CD4-positive, alpha-beta memory T cell (primary cell): ENCODE measurements at regions of chr4 and their contacts with region 1.

Region 1: DNA sequence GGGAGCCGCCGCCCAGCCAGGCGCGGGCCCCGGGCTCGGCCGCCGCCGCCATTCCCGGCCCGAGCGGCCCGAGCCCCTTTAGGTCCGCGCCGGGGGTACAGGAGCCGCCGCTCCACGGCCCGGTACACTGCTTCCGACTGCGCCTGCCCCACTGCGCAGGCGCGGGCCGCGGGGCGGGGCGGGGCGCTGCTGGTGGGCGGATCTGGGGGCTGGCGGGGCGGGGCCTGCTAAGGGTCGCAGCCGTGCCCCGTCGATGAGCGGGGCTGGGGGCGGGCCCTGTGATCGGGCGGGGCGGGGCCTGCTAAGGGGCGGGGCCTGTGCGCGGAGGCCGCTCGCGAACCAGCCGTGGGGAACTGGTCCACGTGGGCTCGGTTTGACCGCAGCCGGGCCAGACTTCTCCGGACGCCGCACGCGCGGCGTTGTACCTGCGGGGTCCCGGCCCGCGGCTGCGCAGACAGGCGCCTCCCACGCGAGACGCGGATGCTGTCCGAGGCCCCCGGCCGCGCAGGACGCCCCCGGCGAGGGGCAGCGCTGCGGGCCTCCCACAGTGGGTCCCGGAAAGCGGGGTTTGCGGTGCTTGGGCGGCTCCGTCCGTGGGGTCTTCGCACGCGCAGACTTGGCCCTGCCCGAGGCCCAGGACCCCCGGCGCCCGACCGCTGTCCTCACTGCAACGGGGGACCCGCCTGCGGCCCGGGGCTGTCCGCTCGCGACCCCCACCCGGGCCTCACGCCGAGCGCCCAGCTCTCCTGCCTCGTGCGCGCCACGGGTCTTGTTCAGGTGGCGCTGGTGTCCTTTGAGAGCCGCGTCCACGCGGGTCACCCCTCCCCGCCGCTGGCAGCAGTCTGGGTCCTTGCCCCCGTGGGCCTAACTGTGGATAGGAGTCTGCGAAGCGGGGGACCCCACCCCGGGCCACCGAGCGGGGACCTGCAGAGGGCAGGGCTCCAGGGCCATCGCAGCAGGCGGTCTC is at the start of gene DGKQ:
- DNase-seq: peak; percentile 78 to 88 (median 83)
- H3K4me3 ChIP-seq: peak within 1 kb of the TSS; percentile 36 to 57
- H3K4me3 Mint-ChIP-seq: peak within 1 kb of the TSS; percentile 34 to 76 (median 52)
- H3K27ac ChIP-seq: peak within 1 kb of the TSS; percentile 51
- H3K27ac Mint-ChIP-seq: peak within 1 kb of the TSS in 1 of 7 donors; percentile 60
- H3K4me1 ChIP-seq: peaks cover 24% of the 10 kb centered on the region
- H3K4me1 Mint-ChIP-seq: peaks cover 0 to 13% (median 3%) of the 10 kb centered on the region in 4 donors
- H3K27me3 ChIP-seq: no peaks in the 10 kb centered on the region
- H3K27me3 Mint-ChIP-seq: no peaks in the 10 kb centered on the region
- total RNA-seq, gene DGKQ: 25.9 to 29.6 TPM

Region 2: GRCh38 chr4:986879-987623 is 13.3 kb after region 1 on chr4 and contains the start of gene IDUA:
- CTCF ChIA-PET with region 1: interaction called, 4 read pairs
- POLR2A ChIA-PET with region 1: interaction called, 10 read pairs
- intact Hi-C with region 1: loop called (anchors 1 kb)
- DNase-seq: peak; percentile 79 to 84 (median 82)
- H3K4me3 ChIP-seq: peak within 1 kb of the TSS; percentile 76 to 83
- H3K4me3 Mint-ChIP-seq: peak within 1 kb of the TSS; percentile 88 to 95 (median 90)
- H3K27ac ChIP-seq: peak within 1 kb of the TSS; percentile 60
- H3K27ac Mint-ChIP-seq: peak within 1 kb of the TSS; percentile 40 to 92 (median 83)
- H3K4me1 ChIP-seq: peaks cover 34% of the 10 kb centered on the region
- H3K4me1 Mint-ChIP-seq: peaks cover 8 to 35% (median 15%) of the 10 kb centered on the region in 4 donors
- H3K27me3 ChIP-seq: no peaks in the 10 kb centered on the region
- H3K27me3 Mint-ChIP-seq: no peaks in the 10 kb centered on the region
- total RNA-seq, gene IDUA: 63.0 to 64.1 TPM

Region 3: DNA sequence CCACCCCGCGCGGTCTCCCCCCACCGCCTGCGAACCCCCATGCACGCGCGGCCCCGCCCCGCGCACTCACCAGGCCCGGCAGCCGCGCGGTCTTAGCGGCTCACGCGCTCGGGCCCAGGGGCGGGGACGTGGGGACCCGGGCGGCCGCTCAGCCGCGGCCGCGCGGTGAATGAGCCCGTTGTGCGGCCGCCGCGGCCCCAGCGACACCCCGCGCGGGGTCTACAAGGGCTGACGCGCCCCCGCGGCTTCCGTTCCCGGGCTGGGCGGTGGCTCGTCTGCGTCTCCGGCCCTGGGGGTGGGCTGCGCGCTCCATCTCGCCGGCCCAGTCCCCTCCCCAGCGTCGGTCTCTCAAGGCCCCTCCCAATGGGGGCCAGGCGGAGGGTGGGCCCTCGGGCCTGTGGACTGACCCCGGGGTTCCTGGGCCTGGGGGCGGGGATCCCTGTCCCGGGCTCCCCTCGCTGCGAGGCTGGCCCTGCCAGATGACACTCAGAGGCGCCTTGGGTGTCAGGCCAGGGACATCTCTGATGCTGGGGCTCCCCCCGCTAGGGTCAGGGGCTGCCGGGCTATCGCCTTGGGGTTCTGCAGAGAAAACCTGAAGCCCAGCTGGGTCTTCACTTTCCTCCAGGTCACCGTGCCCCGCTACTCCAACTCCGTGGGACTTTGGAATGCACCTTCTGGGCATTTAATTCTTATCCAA is 23.8 kb after region 1 on chr4:
- CTCF ChIA-PET with region 1: no interaction called
- POLR2A ChIA-PET with region 1: no interaction called
- intact Hi-C with region 1: no loop called
- DNase-seq: peak in 1 of 5 donors; percentile 29
- H3K4me3 ChIP-seq: no peak overlapping the region
- H3K4me3 Mint-ChIP-seq: peak overlapping the region in 4 of 8 donors; percentile 17 to 63 (median 52)
- H3K27ac ChIP-seq: no peak overlapping the region
- H3K27ac Mint-ChIP-seq: no peak overlapping the region
- H3K4me1 ChIP-seq: peaks cover 9% of the 10 kb centered on the region
- H3K4me1 Mint-ChIP-seq: peaks cover 0 to 13% (median 6%) of the 10 kb centered on the region in 4 donors
- H3K27me3 ChIP-seq: peaks cover 6% of the 10 kb centered on the region
- H3K27me3 Mint-ChIP-seq: peaks cover 9 to 14% of the 10 kb centered on the region in 2 donors